ENCODE measurements at regions of chr12 and their contacts with region 1.

Region 1: GRCh38 chr12:105382771-105383622 is 52.5 kb downstream of the C12orf75 start:
- DNase-seq: peak in 4 of 7 donors; percentile 28 to 37 (median 34)
- H3K4me3 ChIP-seq: peak overlapping the region in 1 of 4 donors; percentile 4
- H3K27ac ChIP-seq: no peak overlapping the region
- H3K4me1 ChIP-seq: peaks cover 0 to 4% of the 10 kb centered on the region in 2 donors
- H3K27me3 ChIP-seq: no peaks in the 10 kb centered on the region
- CTCF ChIP-seq: peak; percentile 75 to 90 (median 84)
- POLR2A ChIP-seq: no peak

Region 2: GRCh38 chr12:105164068-105164467 is 218.9 kb before region 1 on chr12:
- intact Hi-C with region 1: loop called in 1 of 2 experiments (anchors 10 kb)
- DNase-seq: no peak
- H3K4me3 ChIP-seq: no peak overlapping the region
- H3K27ac ChIP-seq: no peak overlapping the region
- H3K4me1 ChIP-seq: no peaks in the 10 kb centered on the region
- H3K27me3 ChIP-seq: no peaks in the 10 kb centered on the region
- CTCF ChIP-seq: no peak
- POLR2A ChIP-seq: no peak

Region 3: DNA sequence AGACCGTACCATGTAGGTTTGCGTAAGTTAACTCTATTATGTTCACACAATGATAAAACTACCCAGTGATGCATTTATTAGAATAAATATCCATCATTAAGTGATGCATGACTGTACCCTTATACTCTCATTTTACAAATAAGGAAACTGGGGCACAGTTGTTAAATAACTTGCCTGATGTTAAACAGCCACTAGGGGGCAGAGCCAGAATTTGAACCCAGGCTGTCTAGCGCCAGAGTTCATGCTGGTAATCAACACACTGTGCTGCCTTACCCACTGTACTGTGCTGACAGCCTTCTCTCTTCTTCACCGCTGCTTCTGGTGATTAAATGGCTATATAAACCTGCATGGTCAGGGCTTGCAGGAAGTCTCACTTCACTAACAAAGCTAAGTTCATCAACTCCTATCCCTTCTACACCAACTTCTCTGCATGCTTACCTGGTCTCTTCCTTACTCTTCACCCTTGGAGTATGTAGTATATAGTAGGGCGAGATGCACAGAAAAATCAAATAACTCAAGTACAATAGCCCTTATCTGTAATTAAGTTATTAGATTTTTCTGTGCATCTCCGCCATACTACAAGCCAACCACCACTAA is 103.4 kb before region 1 on chr12:
- intact Hi-C with region 1: loop called in 1 of 2 experiments (anchors 10 kb)
- DNase-seq: peak in 5 of 7 donors; percentile 32 to 57 (median 37)
- H3K4me3 ChIP-seq: no peak overlapping the region
- H3K27ac ChIP-seq: no peak overlapping the region
- H3K4me1 ChIP-seq: no peaks in the 10 kb centered on the region
- H3K27me3 ChIP-seq: peaks cover 6% of the 10 kb centered on the region
- CTCF ChIP-seq: peak; percentile 42 to 70 (median 54)
- POLR2A ChIP-seq: no peak

Measured in adrenal gland (tissue), 19 donors.